Gastrocnemius medialis (tissue), 4 donors: ENCODE measurements at regions of chr2 and their contacts with region 1.

Region 1: DNA sequence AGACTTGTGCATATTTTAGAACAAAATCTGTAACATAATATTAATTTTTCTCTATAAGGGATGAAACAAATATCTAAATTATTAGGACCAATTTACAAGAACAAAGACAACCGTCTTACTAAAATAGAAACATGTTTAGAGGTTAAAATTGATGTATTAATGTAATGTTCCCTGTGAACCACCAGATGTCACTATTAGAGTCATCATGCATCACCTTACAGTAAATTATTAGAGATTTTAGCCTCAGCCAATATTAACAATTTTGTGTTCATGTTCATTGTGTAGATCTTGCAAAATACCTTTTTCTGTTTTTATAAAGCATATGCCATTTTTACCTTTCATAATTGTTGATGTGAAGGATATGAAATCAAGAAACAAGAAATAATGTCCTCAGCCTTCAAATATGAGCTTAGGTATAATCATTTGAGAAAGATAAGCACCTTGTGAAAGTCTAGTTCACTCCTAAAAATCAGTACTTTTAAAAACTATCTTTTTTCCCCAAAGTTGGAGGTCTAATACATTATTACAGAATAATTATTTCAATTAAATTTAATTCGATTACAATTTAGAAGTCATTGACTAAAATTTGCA is 344.3 kb upstream of the KCNH7 start:
- DNase-seq: no peak
- ATAC-seq: no peak
- H3K4me3 ChIP-seq: no peak overlapping the region
- H3K27ac ChIP-seq: no peak overlapping the region
- H3K4me1 ChIP-seq: no peaks in the 10 kb centered on the region
- H3K27me3 ChIP-seq: no peaks in the 10 kb centered on the region
- CTCF ChIP-seq: peak in 3 of 5 experiments; percentile 22 to 53 (median 36)
- POLR2A ChIP-seq: no peak

Region 2: DNA sequence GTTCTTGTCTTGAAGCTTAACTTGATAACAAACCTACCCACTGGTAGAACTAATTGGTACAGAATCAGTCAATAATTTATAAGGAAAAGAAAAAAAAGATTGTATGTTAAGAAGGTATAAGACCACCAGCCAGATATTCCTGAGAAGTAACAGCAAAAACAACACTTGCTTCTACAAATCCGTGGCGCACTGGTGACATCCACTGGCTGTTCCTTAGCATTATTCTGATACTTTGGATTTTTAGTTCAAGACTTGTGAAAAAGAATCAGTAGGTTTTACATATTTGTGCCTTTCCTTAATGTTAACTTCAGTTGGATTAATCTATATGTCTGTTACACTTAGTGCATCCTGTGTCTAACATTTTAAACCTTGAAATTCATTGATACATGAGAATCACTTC is 1296.6 kb after region 1 on chr2:
- in situ Hi-C with region 1: loop called in 1 of 4 experiments (anchors 25 kb)
- intact Hi-C with region 1: loop called (anchors 10 kb)
- DNase-seq: no peak
- ATAC-seq: no peak
- H3K4me3 ChIP-seq: no peak overlapping the region
- H3K27ac ChIP-seq: no peak overlapping the region
- H3K4me1 ChIP-seq: no peaks in the 10 kb centered on the region
- H3K27me3 ChIP-seq: no peaks in the 10 kb centered on the region
- CTCF ChIP-seq: peak in 1 of 5 experiments; percentile 12
- POLR2A ChIP-seq: no peak